ENCODE measurements at regions of chr2 and their contacts with region 1.

Region 1: GRCh38 chr2:158034199-158034866 is 67.3 kb upstream of the UPP2 start:
- DNase-seq: peak; percentile 66
- H3K4me3 ChIP-seq: no peak overlapping the region
- H3K27ac ChIP-seq: no peak overlapping the region
- H3K4me1 ChIP-seq: no peaks in the 10 kb centered on the region
- H3K27me3 ChIP-seq: peaks cover 22% of the 10 kb centered on the region

Region 2: GRCh38 chr2:157856187-157856515 is 178.2 kb before region 1 on chr2:
- in situ Hi-C with region 1: no loop called
- DNase-seq: peak; percentile 47
- H3K4me3 ChIP-seq: peak overlapping the region; percentile 24; the same call in 1 of the 2 replicates
- H3K27ac ChIP-seq: peak overlapping the region; percentile 97
- H3K4me1 ChIP-seq: peaks cover 28% of the 10 kb centered on the region
- H3K27me3 ChIP-seq: no peaks in the 10 kb centered on the region

Region 3: DNA sequence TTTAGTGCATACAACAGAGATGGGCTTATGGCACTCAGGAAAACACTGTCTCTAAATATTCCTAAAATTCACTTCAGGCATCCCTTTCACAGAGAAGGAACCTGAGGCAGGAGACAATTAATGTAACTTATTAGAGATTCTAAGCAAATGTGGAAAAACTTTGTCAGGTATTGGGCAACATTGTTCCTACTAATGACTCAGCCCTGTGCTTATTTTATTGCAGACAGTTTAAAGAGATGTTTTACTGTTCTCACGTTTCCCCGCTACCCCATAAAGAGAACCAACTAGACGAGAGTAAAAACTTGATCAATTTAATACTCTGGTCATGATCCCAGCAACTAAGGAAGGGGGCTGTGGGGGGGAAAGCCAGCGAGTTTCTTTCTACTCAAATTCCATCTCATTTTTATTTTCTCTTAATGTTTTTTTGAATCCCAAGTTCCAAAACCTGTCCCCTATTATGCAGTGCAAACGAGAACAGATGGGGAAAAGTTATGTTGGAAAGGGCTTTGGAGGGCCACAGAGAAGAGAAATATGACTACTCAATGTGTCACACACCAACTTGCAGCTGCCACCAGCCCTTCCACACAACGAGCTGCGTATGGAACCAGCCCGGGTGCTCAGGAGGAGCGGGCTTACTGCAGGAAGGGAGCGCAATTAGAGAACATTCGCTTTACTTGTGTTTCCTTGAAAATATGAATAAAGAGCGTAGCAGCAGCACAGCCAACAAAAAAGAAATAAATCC is 139.5 kb before region 1 on chr2:
- in situ Hi-C with region 1: no loop called
- DNase-seq: peak; percentile 90
- H3K4me3 ChIP-seq: peak overlapping the region; percentile 63
- H3K27ac ChIP-seq: peak overlapping the region; percentile 71
- H3K4me1 ChIP-seq: peaks cover 28% of the 10 kb centered on the region
- H3K27me3 ChIP-seq: no peaks in the 10 kb centered on the region

Region 4: GRCh38 chr2:158456309-158457066 is 422.2 kb after region 1 on chr2 and contains the starts of genes CCDC148 and PKP4:
- in situ Hi-C with region 1: loop called (anchors 25 kb)
- DNase-seq: peak; percentile 98
- H3K4me3 ChIP-seq: peak within 1 kb of the TSS; percentile 92
- H3K27ac ChIP-seq: peak within 1 kb of the TSS; percentile 60
- H3K4me1 ChIP-seq: peaks cover 29% of the 10 kb centered on the region
- H3K27me3 ChIP-seq: no peaks in the 10 kb centered on the region
- total RNA-seq, gene CCDC148: 0.13 and 0.86 TPM in 2 replicates
- total RNA-seq, gene PKP4: 27.7 and 32.2 TPM in 2 replicates

Region 5: DNA sequence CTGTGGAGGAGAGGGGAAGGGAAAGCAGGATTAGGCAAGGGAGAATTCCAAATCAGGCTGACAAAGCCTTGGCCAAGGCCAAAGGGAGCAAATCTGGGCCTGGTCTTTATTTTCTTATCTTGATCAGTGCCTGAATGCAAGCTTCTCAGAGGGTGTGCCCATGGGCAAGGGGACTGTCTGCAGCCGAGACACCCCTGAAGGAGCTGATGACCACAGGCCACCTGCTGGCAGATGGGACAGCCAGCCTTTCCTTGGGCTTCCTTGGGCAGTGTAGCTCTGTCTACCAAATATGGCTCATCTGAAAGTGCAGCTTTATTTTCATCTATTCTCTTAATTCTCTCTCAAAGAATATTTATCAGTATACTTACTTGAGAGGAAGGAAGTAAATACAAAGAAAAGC is 539.4 kb after region 1 on chr2:
- in situ Hi-C with region 1: loop called (anchors 25 kb)
- DNase-seq: no peak
- H3K4me3 ChIP-seq: no peak overlapping the region
- H3K27ac ChIP-seq: no peak overlapping the region
- H3K4me1 ChIP-seq: no peaks in the 10 kb centered on the region
- H3K27me3 ChIP-seq: no peaks in the 10 kb centered on the region

Region 6: GRCh38 chr2:158745044-158745865 is 710.9 kb after region 1 on chr2:
- in situ Hi-C with region 1: loop called (anchors 10 kb)
- DNase-seq: peak; percentile 72
- H3K4me3 ChIP-seq: no peak overlapping the region
- H3K27ac ChIP-seq: no peak overlapping the region
- H3K4me1 ChIP-seq: no peaks in the 10 kb centered on the region
- H3K27me3 ChIP-seq: peaks cover 30% of the 10 kb centered on the region

Region 7: GRCh38 chr2:159209341-159210306 is 1175.3 kb after region 1 on chr2:
- in situ Hi-C with region 1: no loop called
- DNase-seq: no peak
- H3K4me3 ChIP-seq: no peak overlapping the region
- H3K27ac ChIP-seq: no peak overlapping the region
- H3K4me1 ChIP-seq: no peaks in the 10 kb centered on the region
- H3K27me3 ChIP-seq: no peaks in the 10 kb centered on the region

Measured in GM23248 (cell line).